Activated CD4-positive, alpha-beta memory T cell treated with anti-CD3 and anti-CD28 coated beads, Interleukin-2, amount 10 ng/mL, durations not matched to agents 7 days and 5 days (primary cell): ENCODE measurements at regions of chr17 and their contacts with region 1.

Region 1: GRCh38 chr17:78432226-78433012 is 54.0 kb downstream of the PGS1 start:
- DNase-seq: no peak
- H3K4me3 Mint-ChIP-seq: no peak overlapping the region
- H3K27ac Mint-ChIP-seq: no peak overlapping the region
- H3K4me1 Mint-ChIP-seq: no peaks in the 10 kb centered on the region
- H3K27me3 Mint-ChIP-seq: no peaks in the 10 kb centered on the region

Region 2: GRCh38 chr17:78421484-78422266 is 10.7 kb before region 1 on chr17:
- CTCF ChIA-PET with region 1: interaction called, 13 read pairs
- POLR2A ChIA-PET with region 1: no interaction called
- DNase-seq: peak; percentile 81
- H3K4me3 Mint-ChIP-seq: no peak overlapping the region
- H3K27ac Mint-ChIP-seq: peak overlapping the region; percentile 58
- H3K4me1 Mint-ChIP-seq: peaks cover 54% of the 10 kb centered on the region
- H3K27me3 Mint-ChIP-seq: no peaks in the 10 kb centered on the region